ENCODE measurements at regions of chr1 and their contacts with region 1.

Region 1: DNA sequence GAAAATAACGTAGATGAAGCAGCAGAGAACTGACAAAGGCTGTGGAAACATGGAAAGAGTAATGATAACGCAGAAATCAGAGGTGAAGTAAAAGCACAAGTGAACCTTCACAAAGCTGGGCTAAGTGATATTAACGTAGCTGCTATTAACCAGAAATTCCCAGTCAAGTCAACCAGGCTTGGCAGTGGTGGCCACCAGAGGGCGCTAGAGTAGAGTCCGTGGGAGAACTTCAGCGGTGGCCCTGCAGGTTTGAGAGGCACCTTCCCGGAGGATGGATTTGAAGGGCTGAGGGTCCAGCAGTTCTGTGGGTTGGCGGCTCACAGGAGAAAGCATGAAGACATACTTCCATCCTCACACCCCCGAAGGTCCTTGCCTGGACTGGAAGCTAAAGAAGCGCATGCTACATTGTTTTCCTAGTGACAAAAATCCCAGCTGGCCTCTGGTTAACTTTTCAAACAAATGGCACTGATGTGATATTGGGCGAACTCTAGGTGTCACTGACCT is 81.7 kb upstream of the ZNF648 start:
- DNase-seq: peak; percentile 51
- H3K4me3 ChIP-seq: no peak overlapping the region
- H3K27ac ChIP-seq: no peak overlapping the region
- H3K27me3 ChIP-seq: peaks cover 3% of the 10 kb centered on the region
- CTCF ChIP-seq: peak; percentile 94

Region 2: DNA sequence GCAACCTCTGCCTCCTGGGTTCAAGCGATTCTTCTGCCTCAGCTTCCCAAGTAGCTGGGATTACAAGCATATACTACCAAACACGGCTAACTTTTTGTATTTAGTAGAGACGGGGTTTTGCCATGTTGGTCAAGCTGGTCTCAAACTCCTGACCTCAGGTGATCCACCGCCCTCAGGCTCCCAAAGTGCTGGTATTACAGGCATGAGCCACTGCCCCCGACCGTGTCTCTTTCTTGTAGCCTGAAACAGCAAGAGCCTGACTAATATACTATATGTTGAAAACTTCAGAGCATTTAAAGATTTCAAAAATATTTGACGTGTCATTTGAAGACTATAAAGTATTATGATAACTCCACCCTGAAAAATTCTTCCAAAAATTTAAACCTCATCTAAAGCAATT is 10.0 kb before region 1 on chr1:
- CTCF ChIA-PET with region 1: interaction called, 13 read pairs
- POLR2A ChIA-PET with region 1: no interaction called
- DNase-seq: no peak
- H3K4me3 ChIP-seq: no peak overlapping the region
- H3K27ac ChIP-seq: no peak overlapping the region
- H3K27me3 ChIP-seq: no peaks in the 10 kb centered on the region
- CTCF ChIP-seq: no peak

Region 3: DNA sequence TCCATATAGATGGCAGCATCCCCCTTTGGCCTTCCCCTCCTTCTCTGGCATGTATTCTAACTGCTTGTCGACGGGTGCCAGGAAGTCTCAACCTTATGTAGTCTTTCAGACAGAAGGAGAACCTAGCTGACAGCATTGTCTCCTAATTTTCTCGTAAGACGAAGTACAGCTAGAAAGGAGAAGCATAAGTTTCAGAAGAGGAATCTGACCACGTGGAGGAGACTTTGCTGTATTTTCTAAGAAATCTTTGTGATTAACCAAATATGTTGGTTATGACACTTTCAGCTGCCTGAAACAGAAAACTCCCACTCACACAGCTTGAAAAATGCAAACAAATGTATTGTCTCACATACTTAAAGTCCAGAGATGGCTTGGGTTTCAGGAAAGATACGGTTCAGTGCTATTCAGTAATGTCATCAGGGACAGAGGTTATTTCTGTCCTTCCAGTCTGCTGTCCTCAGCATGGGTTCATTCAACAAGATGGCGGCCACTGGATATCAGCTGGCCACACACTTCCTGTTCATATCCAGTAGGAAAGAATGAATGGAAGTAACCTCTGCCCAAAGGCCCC is 27.8 kb after region 1 on chr1:
- CTCF ChIA-PET with region 1: interaction called, 12 read pairs
- POLR2A ChIA-PET with region 1: no interaction called
- DNase-seq: no peak
- H3K4me3 ChIP-seq: no peak overlapping the region
- H3K27ac ChIP-seq: no peak overlapping the region
- H3K27me3 ChIP-seq: no peaks in the 10 kb centered on the region
- CTCF ChIP-seq: no peak

Region 4: GRCh38 chr1:182198049-182198501 is 54.9 kb after region 1 on chr1:
- CTCF ChIA-PET with region 1: interaction called, 10 read pairs
- POLR2A ChIA-PET with region 1: no interaction called
- DNase-seq: no peak
- H3K4me3 ChIP-seq: no peak overlapping the region
- H3K27ac ChIP-seq: no peak overlapping the region
- H3K27me3 ChIP-seq: no peaks in the 10 kb centered on the region
- CTCF ChIP-seq: peak; percentile 13; the same call in 1 of the 2 replicates

Region 5: GRCh38 chr1:182391362-182392044 is 248.3 kb after region 1 on chr1 and contains the start of gene GLUL:
- CTCF ChIA-PET with region 1: interaction called, 536 read pairs
- POLR2A ChIA-PET with region 1: interaction called, 17 read pairs
- DNase-seq: peak; percentile 77
- H3K4me3 ChIP-seq: peak within 1 kb of the TSS; percentile 78
- H3K27ac ChIP-seq: peak within 1 kb of the TSS; percentile 87
- H3K27me3 ChIP-seq: no peaks in the 10 kb centered on the region
- CTCF ChIP-seq: 0 out of 2 replicates have a peak, but pooled peaks have one; percentile 11
- polyA plus RNA-seq, gene GLUL: 151 and 182 TPM in 2 replicates